ENCODE measurements at regions of chr15 and their contacts with region 1.

Region 1: GRCh38 chr15:49901996-49902684 is 216.9 kb downstream of the ATP8B4 start:
- DNase-seq: peak; percentile 65
- ATAC-seq: peak; percentile 65
- H3K4me3 ChIP-seq: no peak overlapping the region
- H3K27ac ChIP-seq: peak overlapping the region; percentile 98
- H3K4me1 ChIP-seq: peaks cover 24% of the 10 kb centered on the region
- H3K27me3 ChIP-seq: no peaks in the 10 kb centered on the region
- CTCF ChIP-seq: peak; percentile 66
- POLR2A ChIP-seq: no peak
- RAD21 ChIP-seq: peak; percentile 65

Region 2: DNA sequence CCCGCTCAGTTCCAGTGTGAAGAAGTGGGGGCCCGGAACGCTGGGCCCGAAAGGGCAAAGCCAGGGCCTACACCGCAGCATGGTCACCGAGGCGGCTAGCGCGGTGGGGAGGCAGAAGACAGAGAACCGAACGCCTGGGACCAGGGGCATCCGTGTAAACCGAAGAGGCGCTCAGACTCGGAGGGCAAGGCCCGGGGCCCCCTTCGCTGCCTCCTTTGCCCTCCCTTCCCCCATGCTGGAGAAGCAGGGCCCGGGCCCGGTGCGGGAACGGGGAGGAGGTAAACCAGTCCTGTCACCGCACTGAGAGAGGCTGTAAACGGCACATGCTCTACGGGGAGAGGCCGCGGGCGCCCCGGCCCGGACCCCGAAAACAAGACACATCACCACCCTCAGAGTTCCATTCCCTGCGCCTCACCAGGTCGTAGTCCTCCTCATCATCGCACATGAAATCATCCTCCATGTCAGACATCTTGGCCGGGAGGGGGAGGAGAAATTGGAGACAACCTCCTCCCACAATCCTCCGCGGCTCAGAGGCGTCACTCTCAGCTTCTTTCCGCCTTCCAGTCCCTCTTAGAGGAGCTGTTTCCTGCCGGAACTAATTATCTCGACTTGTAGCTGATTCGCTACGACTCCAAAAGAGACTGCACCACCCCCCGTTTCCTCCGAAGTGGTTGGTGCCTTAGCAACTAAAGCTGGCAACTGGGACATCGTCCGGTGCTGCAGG is 746.9 kb before region 1 on chr15 and contains the start of gene COPS2:
- CTCF ChIA-PET with region 1: no interaction called
- POLR2A ChIA-PET with region 1: no interaction called
- dilution Hi-C with region 1: no loop called
- in situ Hi-C with region 1: no loop called
- intact Hi-C with region 1: loop called (anchors 5 kb)
- DNase-seq: peak; percentile 99
- ATAC-seq: peak; percentile 97
- H3K4me3 ChIP-seq: peak within 1 kb of the TSS; percentile 70
- H3K27ac ChIP-seq: peak within 1 kb of the TSS; percentile 78
- H3K4me1 ChIP-seq: no peaks in the 10 kb centered on the region
- H3K27me3 ChIP-seq: no peaks in the 10 kb centered on the region
- CTCF ChIP-seq: no peak
- POLR2A ChIP-seq: peak; percentile 86
- RAD21 ChIP-seq: no peak
- total RNA-seq, gene COPS2: 75.6 and 103 TPM in 2 replicates

Region 3: DNA sequence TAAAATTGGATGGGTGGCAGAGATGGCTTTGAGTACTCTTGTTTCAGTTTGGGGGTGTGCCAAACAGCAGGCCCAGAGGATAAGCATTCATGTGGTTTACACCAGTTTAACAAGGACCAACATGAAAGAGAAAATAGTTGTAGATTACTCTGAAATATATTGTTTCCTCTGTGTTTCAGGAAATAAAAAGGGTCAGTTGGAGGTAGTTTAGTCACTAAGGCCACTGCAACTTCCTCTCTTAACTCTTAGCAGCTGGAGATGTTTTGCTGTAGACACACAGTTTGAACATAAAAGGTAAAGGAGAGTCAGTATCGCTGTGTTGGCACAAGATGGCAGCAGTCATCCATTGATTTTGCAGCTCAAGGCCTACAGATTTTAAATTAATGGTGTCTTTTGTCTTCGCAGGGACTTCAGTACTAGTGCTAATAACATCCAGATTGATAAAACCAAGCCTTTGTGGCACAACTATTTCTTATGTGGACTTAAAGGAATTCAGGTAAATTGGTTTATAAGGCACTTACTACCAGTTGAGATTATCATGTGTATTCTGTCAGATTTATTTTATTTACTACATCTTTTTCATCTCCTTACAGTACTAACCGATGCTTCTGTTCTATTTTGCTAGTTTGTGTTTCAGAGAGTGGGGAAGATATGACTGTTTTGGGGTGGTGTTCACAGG is 666.6 kb before region 1 on chr15:
- CTCF ChIA-PET with region 1: interaction called, 5 read pairs
- POLR2A ChIA-PET with region 1: no interaction called
- dilution Hi-C with region 1: no loop called
- in situ Hi-C with region 1: loop called (anchors 25 kb)
- intact Hi-C with region 1: loop called (anchors 1 kb)
- DNase-seq: peak; percentile 92
- ATAC-seq: peak; percentile 88
- H3K4me3 ChIP-seq: no peak overlapping the region
- H3K27ac ChIP-seq: peak overlapping the region; percentile 70; the same call in 1 of the 2 replicates
- H3K4me1 ChIP-seq: peaks cover 3% of the 10 kb centered on the region
- H3K27me3 ChIP-seq: no peaks in the 10 kb centered on the region
- CTCF ChIP-seq: peak; percentile 91
- POLR2A ChIP-seq: no peak
- RAD21 ChIP-seq: peak; percentile 94

Region 4: DNA sequence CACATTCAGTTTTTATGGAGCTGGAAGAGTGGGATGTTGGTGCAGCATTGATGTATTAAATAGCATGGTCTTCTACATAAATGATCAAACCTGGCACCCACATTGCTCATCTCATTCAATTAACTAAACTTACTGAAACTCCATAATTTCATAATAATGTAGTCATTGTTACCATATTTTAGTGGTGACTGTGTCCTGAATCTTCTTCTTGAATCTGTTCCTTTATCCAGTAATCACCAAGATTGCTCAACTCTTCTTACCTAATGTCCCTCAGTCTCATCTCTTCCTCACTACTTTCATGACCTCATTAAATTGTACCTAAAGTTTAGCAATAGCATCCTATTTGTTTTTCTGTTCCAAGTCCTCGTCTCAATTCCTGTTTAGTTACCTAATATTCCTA is 409.3 kb before region 1 on chr15:
- CTCF ChIA-PET with region 1: no interaction called
- POLR2A ChIA-PET with region 1: no interaction called
- dilution Hi-C with region 1: no loop called
- in situ Hi-C with region 1: no loop called
- intact Hi-C with region 1: loop called (anchors 2 kb)
- DNase-seq: peak; percentile 90
- ATAC-seq: no peak
- H3K4me3 ChIP-seq: no peak overlapping the region
- H3K27ac ChIP-seq: no peak overlapping the region
- H3K4me1 ChIP-seq: peaks cover 14% of the 10 kb centered on the region
- H3K27me3 ChIP-seq: no peaks in the 10 kb centered on the region
- CTCF ChIP-seq: no peak
- POLR2A ChIP-seq: no peak
- RAD21 ChIP-seq: no peak

Region 5: GRCh38 chr15:49847937-49848823 is 54.0 kb before region 1 on chr15:
- CTCF ChIA-PET with region 1: no interaction called
- POLR2A ChIA-PET with region 1: no interaction called
- dilution Hi-C with region 1: no loop called
- in situ Hi-C with region 1: no loop called
- intact Hi-C with region 1: loop called (anchors 1 kb)
- DNase-seq: peak; percentile 99
- ATAC-seq: peak; percentile 80
- H3K4me3 ChIP-seq: no peak overlapping the region
- H3K27ac ChIP-seq: peak overlapping the region; percentile 100
- H3K4me1 ChIP-seq: peaks cover 19% of the 10 kb centered on the region
- H3K27me3 ChIP-seq: no peaks in the 10 kb centered on the region
- CTCF ChIP-seq: no peak
- POLR2A ChIP-seq: no peak
- RAD21 ChIP-seq: no peak; the same call in none of the 2 replicates

Region 6: DNA sequence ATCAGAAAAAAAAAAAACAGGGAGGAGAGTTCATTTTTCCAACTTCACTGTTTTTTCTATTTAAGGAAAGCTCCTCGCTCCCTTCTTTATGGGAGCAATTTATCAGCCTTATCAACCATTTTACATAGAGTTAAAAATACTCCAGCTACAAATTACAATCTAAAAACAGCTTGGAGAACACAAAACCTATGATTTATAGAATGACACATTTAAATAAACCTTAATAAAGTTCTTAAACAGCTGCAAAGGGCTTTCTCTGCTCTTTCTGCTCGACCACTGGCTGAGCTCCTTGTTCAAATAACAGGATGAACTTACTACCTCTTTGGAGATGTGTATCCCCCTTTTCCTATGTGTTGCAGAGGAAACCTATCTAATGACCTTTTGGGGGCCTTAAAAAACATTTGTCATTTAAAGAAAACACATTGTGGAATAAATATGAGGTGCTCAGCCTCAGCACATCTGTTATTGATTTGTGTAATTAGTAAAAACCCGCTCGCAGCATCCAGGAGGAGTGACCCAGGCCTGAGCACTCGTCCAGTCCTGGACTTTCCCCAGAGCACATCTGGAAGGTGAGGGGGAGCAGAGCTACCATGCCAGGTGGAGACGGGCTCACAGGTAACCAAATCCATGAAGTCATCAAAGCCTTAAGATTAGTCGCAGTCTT is 14.3 kb before region 1 on chr15:
- CTCF ChIA-PET with region 1: no interaction called
- POLR2A ChIA-PET with region 1: no interaction called
- dilution Hi-C with region 1: no loop called
- in situ Hi-C with region 1: no loop called
- intact Hi-C with region 1: no loop called
- DNase-seq: no peak
- ATAC-seq: no peak
- H3K4me3 ChIP-seq: no peak overlapping the region
- H3K27ac ChIP-seq: no peak overlapping the region; the same call in 1 of the 2 replicates
- H3K4me1 ChIP-seq: no peaks in the 10 kb centered on the region; the same call in 1 of the 2 replicates
- H3K27me3 ChIP-seq: no peaks in the 10 kb centered on the region
- CTCF ChIP-seq: no peak
- POLR2A ChIP-seq: no peak
- RAD21 ChIP-seq: no peak

Region 7: GRCh38 chr15:50134520-50135024 is 232.4 kb after region 1 on chr15:
- CTCF ChIA-PET with region 1: no interaction called
- POLR2A ChIA-PET with region 1: no interaction called
- dilution Hi-C with region 1: no loop called
- in situ Hi-C with region 1: no loop called
- intact Hi-C with region 1: loop called (anchors 5 kb)
- DNase-seq: peak; percentile 89
- ATAC-seq: peak; percentile 44
- H3K4me3 ChIP-seq: no peak overlapping the region
- H3K27ac ChIP-seq: peak overlapping the region; percentile 60
- H3K4me1 ChIP-seq: peaks cover 17% of the 10 kb centered on the region
- H3K27me3 ChIP-seq: no peaks in the 10 kb centered on the region
- CTCF ChIP-seq: no peak
- POLR2A ChIP-seq: no peak
- RAD21 ChIP-seq: no peak